ENCODE measurements at regions of chr15 and their contacts with region 1.

Region 1: DNA sequence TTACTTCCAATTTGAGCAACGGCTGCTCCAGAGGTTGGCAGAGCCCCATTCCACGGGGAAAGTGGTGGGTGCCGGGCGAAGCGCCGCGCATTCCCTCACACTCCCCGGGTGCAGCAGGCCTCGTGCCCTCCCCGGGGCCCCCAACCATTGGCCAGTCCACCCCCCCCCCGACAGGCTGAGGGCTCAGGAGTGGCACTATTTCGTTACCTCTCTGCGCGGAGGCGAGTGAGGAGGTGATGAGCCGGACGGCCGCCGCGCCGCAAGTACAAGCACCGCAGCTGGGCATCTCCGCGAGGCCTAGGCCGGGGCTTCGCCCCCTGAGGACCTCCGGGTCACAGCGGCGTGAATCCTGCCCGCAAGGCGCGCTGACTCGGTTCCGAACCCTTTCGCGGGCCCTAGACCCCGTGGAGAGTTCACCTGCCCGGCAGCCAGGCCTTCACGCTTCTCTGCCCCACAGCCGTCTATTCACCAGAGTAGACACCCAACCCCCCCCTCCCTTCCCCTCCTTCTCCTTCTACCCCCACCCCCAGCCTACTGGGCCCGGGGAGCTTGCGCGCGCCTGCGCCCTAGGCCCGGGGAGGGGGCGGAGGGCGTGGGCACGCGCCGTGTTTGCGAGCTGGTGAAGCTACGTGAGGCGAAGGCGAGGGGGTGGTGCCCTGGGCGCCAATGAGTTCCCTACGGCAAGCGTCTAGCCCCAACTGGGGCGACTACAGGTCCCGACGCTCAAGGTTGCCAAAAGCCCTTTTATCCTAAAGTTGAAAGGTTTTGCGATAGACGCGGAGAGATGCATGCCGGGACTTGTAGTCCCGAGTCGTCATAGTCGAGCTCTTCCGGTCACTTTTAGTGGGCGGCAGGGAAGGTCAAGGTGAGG is at the start of gene CLPX:
- DNase-seq: peak; percentile 93 to 98
- ATAC-seq: peak; percentile 86 to 90
- H3K4me3 ChIP-seq: peak within 1 kb of the TSS; percentile 72
- H3K27ac ChIP-seq: peak within 1 kb of the TSS; percentile 93 to 95
- H3K4me1 ChIP-seq: peaks cover 34% of the 10 kb centered on the region
- CTCF ChIP-seq: no peak
- EP300 ChIP-seq: no peak
- POLR2A ChIP-seq: peak; percentile 58
- RAD21 ChIP-seq: no peak; a peak in 1 of 5 replicates
- polyA plus RNA-seq, gene CLPX: 65.1 and 113 TPM in 2 replicates

Region 2: GRCh38 chr15:64122936-64123351 is 1062.2 kb before region 1 on chr15:
- CTCF ChIA-PET with region 1: no interaction called
- POLR2A ChIA-PET with region 1: no interaction called
- DNase-seq: no peak
- ATAC-seq: no peak
- H3K4me3 ChIP-seq: no peak overlapping the region
- H3K27ac ChIP-seq: no peak overlapping the region
- H3K4me1 ChIP-seq: no peaks in the 10 kb centered on the region
- CTCF ChIP-seq: no peak
- EP300 ChIP-seq: no peak
- POLR2A ChIP-seq: no peak
- RAD21 ChIP-seq: no peak

Region 3: DNA sequence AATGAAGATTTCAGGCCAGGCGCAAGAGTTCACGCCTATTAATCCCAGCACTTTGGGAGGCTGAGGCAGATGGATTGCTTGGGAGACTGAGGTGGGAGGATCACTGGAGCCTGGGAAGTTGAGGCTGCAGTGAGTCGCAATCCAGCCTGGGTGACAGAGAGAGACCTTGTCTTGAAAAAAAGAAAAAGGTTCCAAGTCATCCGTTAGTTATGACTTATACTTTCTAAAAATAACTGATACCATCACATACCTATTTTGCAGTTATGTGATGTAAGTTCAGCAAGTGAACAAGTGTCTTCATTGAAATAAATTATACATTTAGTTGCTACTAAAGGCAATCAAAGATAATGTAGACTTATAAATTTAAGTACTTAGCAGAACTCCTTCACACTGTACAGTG is 22.1 kb before region 1 on chr15:
- CTCF ChIA-PET with region 1: interaction called, 3 read pairs
- POLR2A ChIA-PET with region 1: interaction called, 12 read pairs
- DNase-seq: no peak
- ATAC-seq: no peak
- H3K4me3 ChIP-seq: no peak overlapping the region
- H3K27ac ChIP-seq: no peak overlapping the region
- H3K4me1 ChIP-seq: no peaks in the 10 kb centered on the region
- CTCF ChIP-seq: no peak
- EP300 ChIP-seq: no peak
- POLR2A ChIP-seq: no peak
- RAD21 ChIP-seq: no peak

Region 4: DNA sequence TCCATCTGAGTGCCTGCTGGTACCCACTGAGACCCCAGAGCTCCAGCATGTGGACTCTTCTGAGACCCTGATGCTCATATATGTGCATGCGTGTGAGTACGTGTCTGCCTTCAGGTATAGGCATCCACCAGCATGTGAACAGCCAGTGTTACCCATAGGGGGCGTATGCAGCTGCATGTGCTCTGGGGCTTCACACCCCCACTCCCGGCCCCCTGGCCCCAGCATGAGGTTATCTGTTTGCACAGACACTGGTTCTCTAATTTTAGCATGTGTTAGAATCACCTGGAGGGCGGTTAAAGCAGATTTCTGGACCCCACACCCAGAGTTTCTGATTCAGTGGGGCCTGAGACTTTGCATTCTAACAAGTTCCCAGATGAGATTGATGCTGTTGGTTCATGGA is 27.0 kb after region 1 on chr15:
- CTCF ChIA-PET with region 1: interaction called, 20 read pairs
- POLR2A ChIA-PET with region 1: interaction called, 8 read pairs
- DNase-seq: peak; percentile 48 to 54
- ATAC-seq: peak; percentile 44 to 78; a peak in 3 of 6 replicates
- H3K4me3 ChIP-seq: no peak overlapping the region
- H3K27ac ChIP-seq: no peak overlapping the region
- H3K4me1 ChIP-seq: peaks cover 7% of the 10 kb centered on the region; the same call in 1 of the 3 replicates
- CTCF ChIP-seq: peak; percentile 48
- EP300 ChIP-seq: no peak
- POLR2A ChIP-seq: no peak
- RAD21 ChIP-seq: peak in 1 of 2 experiments; percentile 40; a peak in 2 of 5 replicates

Region 5: GRCh38 chr15:65264863-65265430 is 79.8 kb after region 1 on chr15:
- CTCF ChIA-PET with region 1: interaction called, 408 read pairs
- POLR2A ChIA-PET with region 1: interaction called, 3 read pairs
- DNase-seq: no peak
- ATAC-seq: 0 out of 6 replicates have a peak, but pooled peaks of 1 of the 2 experiments have one; percentile 13
- H3K4me3 ChIP-seq: no peak overlapping the region
- H3K27ac ChIP-seq: no peak overlapping the region
- H3K4me1 ChIP-seq: no peaks in the 10 kb centered on the region
- CTCF ChIP-seq: no peak
- EP300 ChIP-seq: no peak
- POLR2A ChIP-seq: no peak
- RAD21 ChIP-seq: no peak

Region 6: DNA sequence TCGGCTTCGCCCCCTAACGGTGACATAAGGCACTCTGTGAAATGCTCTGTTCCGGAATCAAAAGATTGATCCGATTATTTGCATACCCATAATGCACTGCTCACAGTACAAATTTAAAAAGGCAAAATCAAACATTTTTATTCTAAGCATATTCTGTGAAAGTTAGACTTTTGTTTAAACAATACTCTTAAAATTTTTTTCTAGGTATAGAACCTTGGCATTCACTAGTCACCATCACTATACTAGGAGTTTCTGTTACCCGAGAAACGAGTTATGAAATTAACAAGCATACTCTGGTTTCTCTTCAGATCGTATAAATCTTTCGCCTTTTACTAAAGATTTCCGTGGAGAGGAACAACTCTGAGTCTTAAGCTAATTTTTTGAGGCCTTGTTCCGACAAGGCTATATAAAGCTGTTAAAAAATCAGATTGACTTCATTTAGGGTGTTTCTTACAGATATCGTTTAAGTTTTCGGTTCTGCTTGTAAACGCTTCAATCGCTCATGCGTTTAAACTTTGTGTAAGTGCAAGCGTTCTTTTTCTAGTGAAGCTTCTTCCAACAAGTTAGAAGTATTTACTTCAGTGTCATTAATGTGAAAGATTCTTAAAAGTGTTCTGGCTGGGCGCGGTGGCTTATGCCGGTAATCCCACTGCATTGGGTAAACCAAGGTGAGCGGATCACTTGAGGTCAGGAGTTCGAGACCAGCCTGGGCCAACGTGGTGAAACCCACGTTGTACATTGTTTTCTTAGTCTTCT is 119.5 kb after region 1 on chr15 and contains the start of gene RNU5B-1:
- CTCF ChIA-PET with region 1: interaction called, 177 read pairs
- POLR2A ChIA-PET with region 1: interaction called, 103 read pairs
- DNase-seq: peak; percentile 84 to 98
- ATAC-seq: peak; percentile 83 to 86
- H3K4me3 ChIP-seq: peak within 1 kb of the TSS; percentile 56
- H3K27ac ChIP-seq: peak within 1 kb of the TSS; percentile 85 to 91
- H3K4me1 ChIP-seq: peaks cover 23% of the 10 kb centered on the region
- CTCF ChIP-seq: no peak; the same call in 1 of the 3 replicates
- EP300 ChIP-seq: peak in 1 of 2 experiments; percentile 44; a peak in 1 of 5 replicates
- POLR2A ChIP-seq: peak; percentile 100
- RAD21 ChIP-seq: 0 out of 5 replicates have a peak, but pooled peaks of 1 of the 2 experiments have one; percentile 13
- polyA plus RNA-seq, gene RNU5B-1: not detected in 2 replicates

Region 7: DNA sequence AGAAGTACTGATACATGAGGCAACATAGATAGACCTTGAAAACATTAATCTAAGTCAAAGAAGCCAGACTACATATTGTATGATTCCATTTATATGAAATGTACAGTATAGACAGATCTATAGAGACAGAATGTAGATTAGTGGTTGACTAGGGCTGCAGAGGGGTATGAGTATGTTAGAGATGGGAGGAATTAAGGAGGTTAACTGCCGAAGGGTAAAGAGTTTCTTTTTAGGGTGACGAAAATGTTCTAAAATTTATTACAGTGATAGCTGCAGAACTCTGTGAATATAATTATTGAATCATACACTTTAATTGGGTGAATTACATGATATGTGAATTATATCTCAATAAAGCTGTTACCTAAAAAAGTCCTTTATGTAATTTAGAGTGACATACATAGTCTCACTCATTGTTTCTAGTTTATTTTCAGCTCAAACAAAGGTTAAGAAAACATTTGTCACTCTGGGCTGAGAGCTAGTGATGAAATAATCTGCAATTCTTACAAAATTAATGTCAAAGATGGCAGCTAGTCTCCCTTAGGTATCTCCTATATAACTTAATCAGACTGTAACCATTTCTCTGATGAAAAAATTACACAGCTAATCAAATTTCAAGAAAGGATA is 545.6 kb after region 1 on chr15:
- CTCF ChIA-PET with region 1: no interaction called
- POLR2A ChIA-PET with region 1: no interaction called
- DNase-seq: peak in 1 of 2 experiments; percentile 10
- ATAC-seq: peak in 1 of 2 experiments; percentile 50; a peak in 1 of 6 replicates
- H3K4me3 ChIP-seq: no peak overlapping the region
- H3K27ac ChIP-seq: peak overlapping the region; percentile 36 to 46; a peak in 3 of 6 replicates
- H3K4me1 ChIP-seq: peaks cover 12% of the 10 kb centered on the region; the same call in 2 of the 3 replicates
- CTCF ChIP-seq: no peak
- EP300 ChIP-seq: no peak
- POLR2A ChIP-seq: no peak
- RAD21 ChIP-seq: no peak

Measured in A549 (cell line).